ENCODE measurements at regions of chr1 and their contacts with region 1.

Region 1: GRCh38 chr1:180482425-180483275 is 19.7 kb downstream of the ACBD6 start:
- DNase-seq: peak in 1 of 2 donors; percentile 13
- ATAC-seq: no peak
- H3K4me3 ChIP-seq: no peak overlapping the region
- H3K27ac ChIP-seq: no peak overlapping the region
- H3K4me1 ChIP-seq: peaks cover 0 to 9% (median 0%) of the 10 kb centered on the region in 9 donors
- H3K27me3 ChIP-seq: no peaks in the 10 kb centered on the region
- CTCF ChIP-seq: peak; percentile 66 to 85 (median 74)

Region 2: GRCh38 chr1:180188091-180188506 is 294.6 kb before region 1 on chr1:
- intact Hi-C with region 1: loop called in 6 of 10 experiments (anchors 2 to 10 kb)
- DNase-seq: peak in 1 of 2 donors; percentile 38
- ATAC-seq: peak in 6 of 8 donors; percentile 44 to 65 (median 52)
- H3K4me3 ChIP-seq: no peak overlapping the region
- H3K27ac ChIP-seq: no peak overlapping the region
- H3K4me1 ChIP-seq: no peaks in the 10 kb centered on the region
- H3K27me3 ChIP-seq: no peaks in the 10 kb centered on the region
- CTCF ChIP-seq: peak in 8 of 9 donors; percentile 19 to 66 (median 56)

Region 3: GRCh38 chr1:180252638-180253536 is 229.8 kb before region 1 on chr1:
- intact Hi-C with region 1: loop called (anchors 2 to 5 kb)
- DNase-seq: peak; percentile 70 to 72
- ATAC-seq: peak in 7 of 8 donors; percentile 31 to 74 (median 53)
- H3K4me3 ChIP-seq: no peak overlapping the region
- H3K27ac ChIP-seq: no peak overlapping the region
- H3K4me1 ChIP-seq: no peaks in the 10 kb centered on the region
- H3K27me3 ChIP-seq: peaks cover 0 to 66% (median 46%) of the 10 kb centered on the region in 7 donors
- CTCF ChIP-seq: peak; percentile 57 to 90 (median 77)